ENCODE measurements at regions of chr11 and their contacts with region 1.

Region 1: DNA sequence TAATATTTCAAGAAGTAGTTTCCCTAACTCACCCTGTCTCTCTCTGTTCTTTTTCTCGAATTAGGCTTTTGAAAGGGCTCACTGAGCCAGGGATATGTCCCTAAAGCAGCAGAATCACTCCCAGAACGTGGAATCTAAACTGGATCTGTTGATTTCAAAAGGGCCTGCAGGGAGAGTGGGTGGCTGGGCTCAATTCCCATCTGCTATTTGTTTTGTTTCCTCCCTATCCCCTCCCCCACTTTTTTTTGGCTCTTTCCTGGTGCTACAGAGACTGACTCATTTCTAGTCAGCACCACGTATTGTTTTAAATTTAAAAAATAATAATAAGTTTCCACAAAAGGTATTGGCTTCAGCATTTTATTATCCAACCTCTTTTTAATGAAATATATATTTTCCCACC is 961.5 kb downstream of the FAM181B start:
- DNase-seq: no peak
- H3K4me3 Mint-ChIP-seq: no peak overlapping the region
- H3K27ac Mint-ChIP-seq: no peak overlapping the region
- H3K4me1 Mint-ChIP-seq: no peaks in the 10 kb centered on the region
- H3K27me3 Mint-ChIP-seq: no peaks in the 10 kb centered on the region

Region 2: DNA sequence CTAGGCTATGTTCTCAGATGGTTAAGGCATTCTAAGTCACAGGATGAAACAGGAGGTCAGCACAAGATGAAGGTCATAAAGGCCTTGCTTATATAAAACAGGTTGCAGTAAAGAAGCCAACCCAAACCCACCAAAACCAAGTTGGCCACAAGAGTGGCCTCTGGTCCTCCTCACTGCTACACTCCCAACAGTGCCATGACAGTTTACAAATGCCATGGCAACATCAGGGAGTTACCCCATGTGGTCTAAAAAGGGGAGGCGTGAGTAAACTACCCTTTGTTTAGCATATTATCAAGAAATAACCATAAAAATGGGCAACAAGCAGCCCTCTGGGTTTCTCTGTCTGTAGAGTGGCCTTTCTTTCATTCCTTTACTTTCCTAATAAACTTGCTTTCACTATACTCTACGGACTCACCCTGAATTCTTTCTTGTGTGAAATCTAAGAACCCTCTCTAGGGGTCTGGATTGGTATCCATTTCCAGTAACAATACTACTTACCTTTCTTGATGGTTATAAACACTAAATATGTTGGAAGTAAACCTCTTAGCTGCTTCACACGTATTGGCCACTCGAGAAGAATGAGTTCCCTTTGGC is 276.4 kb before region 1 on chr11:
- CTCF ChIA-PET with region 1: no interaction called
- POLR2A ChIA-PET with region 1: no interaction called
- intact Hi-C with region 1: no loop called
- DNase-seq: no peak
- H3K4me3 Mint-ChIP-seq: no peak overlapping the region
- H3K27ac Mint-ChIP-seq: no peak overlapping the region
- H3K4me1 Mint-ChIP-seq: no peaks in the 10 kb centered on the region
- H3K27me3 Mint-ChIP-seq: peaks cover 4% of the 10 kb centered on the region

Region 3: DNA sequence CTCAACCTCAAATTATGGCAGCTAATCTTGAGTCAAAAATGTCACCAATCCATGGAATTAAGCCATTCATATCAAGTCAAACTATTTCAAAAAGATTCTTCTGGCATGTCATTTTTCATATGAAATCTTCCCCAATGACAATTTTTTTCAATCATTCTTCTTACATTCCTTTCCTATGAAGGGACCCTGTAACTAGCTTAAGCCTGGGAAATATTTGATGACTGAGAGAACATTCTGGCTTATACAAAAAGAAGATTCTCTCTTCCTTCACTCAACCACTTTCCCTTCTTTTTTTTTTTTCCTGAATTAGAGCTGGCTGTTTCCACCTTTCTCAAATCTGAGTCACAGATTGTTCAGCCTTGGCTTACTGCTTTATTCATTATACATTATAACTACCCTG is 57.8 kb after region 1 on chr11:
- CTCF ChIA-PET with region 1: no interaction called
- POLR2A ChIA-PET with region 1: no interaction called
- intact Hi-C with region 1: loop called (anchors 10 kb)
- DNase-seq: no peak
- H3K4me3 Mint-ChIP-seq: no peak overlapping the region
- H3K27ac Mint-ChIP-seq: no peak overlapping the region
- H3K4me1 Mint-ChIP-seq: no peaks in the 10 kb centered on the region
- H3K27me3 Mint-ChIP-seq: no peaks in the 10 kb centered on the region